Right cardiac atrium (tissue), 5 donors: ENCODE measurements at regions of chr16 and their contacts with region 1.

Region 1: DNA sequence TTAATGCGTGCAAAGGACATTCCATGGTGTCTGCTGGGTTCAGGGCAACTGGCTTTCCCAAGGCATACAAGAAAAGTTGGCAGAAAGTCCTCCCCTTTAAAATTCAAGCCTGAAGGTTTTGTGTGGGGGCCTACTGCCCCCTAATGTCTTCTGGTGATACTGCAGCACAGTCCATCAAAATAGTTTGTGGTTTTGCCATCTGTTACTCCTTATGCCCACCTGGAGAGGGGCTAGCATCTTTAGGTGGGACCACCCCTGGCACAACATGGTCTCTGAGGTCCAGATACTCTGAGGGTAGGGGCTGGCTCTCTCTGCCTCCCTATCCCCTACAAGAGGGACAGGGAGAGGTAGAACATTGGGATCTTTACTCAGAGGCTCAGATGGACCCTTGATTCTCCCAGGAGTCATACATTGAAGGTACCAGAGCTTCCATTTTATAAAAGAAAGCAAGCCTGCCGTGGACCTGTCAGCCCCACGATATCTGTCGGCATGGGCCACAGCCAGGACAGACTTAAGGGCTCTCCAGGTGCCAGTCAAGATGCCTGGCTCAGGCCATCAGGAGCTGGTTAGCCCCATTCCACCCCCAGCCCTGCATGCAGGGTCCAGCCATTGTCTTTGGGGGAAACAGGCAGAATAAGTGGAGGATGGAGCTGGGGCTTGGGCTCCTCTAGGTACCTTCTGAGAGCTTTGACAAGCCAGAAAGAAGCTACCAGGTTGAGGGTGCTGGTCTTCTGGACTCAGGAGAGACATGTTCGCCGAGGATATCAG is 6.3 kb downstream of the ESRP2 start:
- DNase-seq: no peak
- ATAC-seq: peak in 1 of 2 donors; percentile 33
- H3K4me3 ChIP-seq: no peak overlapping the region
- H3K27ac ChIP-seq: no peak overlapping the region
- H3K4me1 ChIP-seq: no peaks in the 10 kb centered on the region
- H3K27me3 ChIP-seq: no peaks in the 10 kb centered on the region

Region 2: GRCh38 chr16:68085259-68086071 is 144.2 kb before region 1 on chr16 and contains the start of gene NFATC3:
- intact Hi-C with region 1: loop called in 3 of 4 experiments (anchors 5 to 10 kb)
- DNase-seq: peak; percentile 99 to 100 (median 100)
- ATAC-seq: peak; percentile 89 to 92
- H3K4me3 ChIP-seq: peak within 1 kb of the TSS; percentile 65
- H3K27ac ChIP-seq: peak within 1 kb of the TSS; percentile 98
- H3K4me1 ChIP-seq: peaks cover 9% of the 10 kb centered on the region
- H3K27me3 ChIP-seq: no peaks in the 10 kb centered on the region
- total RNA-seq, gene NFATC3: 28.7 to 34.7 (median 33.6) TPM

Region 3: GRCh38 chr16:68093816-68094613 is 135.6 kb before region 1 on chr16:
- intact Hi-C with region 1: loop called in 3 of 4 experiments (anchors 5 to 10 kb)
- DNase-seq: no peak
- ATAC-seq: peak; percentile 63 to 66
- H3K4me3 ChIP-seq: no peak overlapping the region
- H3K27ac ChIP-seq: no peak overlapping the region
- H3K4me1 ChIP-seq: no peaks in the 10 kb centered on the region
- H3K27me3 ChIP-seq: no peaks in the 10 kb centered on the region

Region 4: DNA sequence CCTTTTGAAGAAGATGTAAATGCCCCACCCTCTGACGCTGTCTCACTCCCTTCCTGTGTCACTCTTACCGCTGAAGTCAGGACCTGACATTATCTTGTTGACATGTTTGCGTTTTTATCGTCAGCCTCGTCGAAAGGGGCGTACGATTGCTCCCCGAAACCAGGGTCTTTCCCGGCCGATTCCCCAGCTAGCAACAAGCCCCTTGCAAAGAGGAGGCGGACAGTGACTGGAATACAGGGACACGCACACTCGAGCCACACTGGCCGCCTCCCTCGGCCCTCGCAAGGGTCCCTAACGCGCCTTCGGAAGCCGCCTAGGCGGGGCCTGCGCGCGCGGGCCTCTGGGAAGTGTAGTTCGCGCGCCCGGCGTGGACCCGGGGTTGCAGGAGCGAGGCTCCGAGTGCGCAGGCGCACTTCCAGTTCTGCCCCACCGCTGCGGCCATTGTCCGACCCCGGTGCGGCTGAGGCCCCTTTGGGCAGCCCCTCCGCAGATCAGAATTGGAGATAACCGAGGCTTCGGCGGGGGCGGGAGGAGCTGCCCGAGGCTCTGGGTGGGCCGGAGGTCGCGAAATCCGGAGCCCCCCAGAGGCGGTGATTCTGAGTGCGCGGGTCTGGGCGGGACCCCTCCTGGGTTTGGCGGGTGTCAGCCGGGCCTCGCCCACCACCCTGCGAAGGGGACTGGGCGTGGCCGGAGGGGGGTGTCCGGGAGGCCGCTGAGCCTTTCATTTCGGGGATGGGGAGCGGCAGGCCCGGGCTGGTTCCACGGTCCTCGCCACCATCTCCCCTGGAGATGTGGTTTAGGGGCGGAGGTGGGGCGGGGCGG is 309.5 kb after region 1 on chr16 and contains the start of gene ZFP90:
- intact Hi-C with region 1: no loop called
- DNase-seq: peak; percentile 93 to 98 (median 96)
- ATAC-seq: peak; percentile 99 to 100
- H3K4me3 ChIP-seq: peak within 1 kb of the TSS; percentile 93
- H3K27ac ChIP-seq: peak within 1 kb of the TSS; percentile 34
- H3K4me1 ChIP-seq: no peaks in the 10 kb centered on the region
- H3K27me3 ChIP-seq: no peaks in the 10 kb centered on the region
- total RNA-seq, gene ZFP90: 12.2 to 14.3 (median 12.5) TPM

Region 5: DNA sequence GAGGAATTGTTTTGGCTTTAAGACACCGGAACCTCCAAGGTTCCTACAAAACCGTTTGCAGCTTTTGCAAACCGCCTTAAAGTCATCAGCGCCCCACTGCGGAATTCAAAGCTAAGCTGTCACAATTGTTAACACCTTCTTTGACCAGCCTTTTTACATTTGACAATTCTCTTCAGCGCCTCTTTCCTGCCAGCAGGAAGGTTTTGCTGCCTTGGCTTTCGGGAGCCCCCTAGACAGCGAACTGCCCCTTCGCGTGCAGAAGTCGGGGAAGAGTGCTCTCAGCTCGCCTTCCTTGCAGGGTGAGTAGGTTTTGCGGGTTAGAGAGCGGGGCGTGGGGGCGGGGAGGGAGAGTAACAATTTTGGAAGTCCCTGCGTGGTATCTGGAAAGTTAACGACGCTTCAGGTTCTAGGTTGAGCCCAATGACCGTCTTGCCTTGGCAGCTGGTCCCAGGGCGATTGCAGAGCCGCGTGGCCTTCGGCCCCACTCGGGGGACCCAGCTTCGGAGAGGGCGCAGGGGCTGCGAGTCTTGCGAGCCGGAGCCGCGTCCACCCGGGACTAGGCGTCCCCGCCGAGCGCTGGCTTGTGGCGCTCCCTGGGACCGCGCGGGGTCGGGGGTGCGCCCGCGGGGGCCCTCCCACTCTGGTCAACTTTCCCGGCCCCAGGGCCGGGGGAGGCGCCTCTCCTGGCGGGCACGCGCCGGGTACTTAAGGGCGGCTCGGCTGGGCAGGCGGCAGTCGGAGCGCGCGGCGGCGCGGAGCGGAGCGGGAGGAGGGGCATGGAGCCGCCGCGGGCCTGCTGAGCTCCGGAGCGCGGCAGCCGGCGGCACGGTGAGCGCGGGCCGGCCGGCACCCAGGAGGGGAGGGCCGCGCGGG is 876.1 kb after region 1 on chr16 and contains the start of gene HAS3:
- intact Hi-C with region 1: no loop called
- DNase-seq: peak; percentile 53 to 79 (median 75)
- ATAC-seq: peak; percentile 79
- H3K4me3 ChIP-seq: peak within 1 kb of the TSS; percentile 49
- H3K27ac ChIP-seq: no peak within 1 kb of the TSS
- H3K4me1 ChIP-seq: peaks cover 8% of the 10 kb centered on the region
- H3K27me3 ChIP-seq: no peaks in the 10 kb centered on the region
- total RNA-seq, gene HAS3: 0.18 to 0.89 (median 0.39) TPM